ENCODE measurements at regions of chr2 and their contacts with region 1.

Region 1: DNA sequence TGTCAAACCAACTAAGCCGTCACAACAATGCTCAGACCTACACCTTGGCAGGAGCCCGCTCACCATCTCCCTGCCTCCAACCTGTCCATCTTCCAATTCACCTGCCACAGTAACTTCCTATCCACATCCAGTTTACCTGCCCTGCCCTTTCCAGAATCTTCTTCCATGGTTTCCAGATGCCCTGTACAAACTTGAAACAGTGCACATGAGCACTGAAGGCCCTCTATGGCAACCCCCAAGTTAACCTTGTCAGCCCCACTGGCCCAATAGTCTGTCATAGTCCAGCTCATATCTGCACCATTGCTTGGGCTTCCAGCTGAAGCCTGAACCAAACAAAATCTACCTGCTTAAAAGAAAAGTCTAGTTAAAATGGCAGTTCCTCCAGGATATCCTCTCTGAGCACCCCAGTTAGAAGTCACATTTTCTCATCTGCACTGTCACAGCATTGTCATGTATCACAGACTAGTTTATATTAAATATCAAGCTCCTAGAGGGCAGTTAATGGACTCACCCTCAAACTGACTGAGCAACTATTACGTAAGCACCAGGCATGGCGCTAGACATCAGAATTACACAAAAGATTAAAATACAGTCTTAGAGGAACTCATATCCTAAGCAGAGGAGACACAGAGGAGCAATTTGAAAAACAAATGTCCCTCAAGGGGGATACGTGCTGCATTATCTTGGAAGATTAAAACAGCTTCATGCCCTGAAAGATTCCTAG is 11.6 kb downstream of the NFE2L2 start:
- DNase-seq: peak; percentile 60
- H3K4me3 Mint-ChIP-seq: peak overlapping the region; percentile 34
- H3K27ac Mint-ChIP-seq: peak overlapping the region; percentile 85
- H3K4me1 Mint-ChIP-seq: peaks cover 71% of the 10 kb centered on the region
- H3K27me3 Mint-ChIP-seq: no peaks in the 10 kb centered on the region

Region 2: GRCh38 chr2:175709248-175709647 is 1543.7 kb before region 1 on chr2:
- intact Hi-C with region 1: no loop called
- DNase-seq: no peak
- H3K4me3 Mint-ChIP-seq: no peak overlapping the region
- H3K27ac Mint-ChIP-seq: no peak overlapping the region
- H3K4me1 Mint-ChIP-seq: no peaks in the 10 kb centered on the region
- H3K27me3 Mint-ChIP-seq: no peaks in the 10 kb centered on the region

Region 3: DNA sequence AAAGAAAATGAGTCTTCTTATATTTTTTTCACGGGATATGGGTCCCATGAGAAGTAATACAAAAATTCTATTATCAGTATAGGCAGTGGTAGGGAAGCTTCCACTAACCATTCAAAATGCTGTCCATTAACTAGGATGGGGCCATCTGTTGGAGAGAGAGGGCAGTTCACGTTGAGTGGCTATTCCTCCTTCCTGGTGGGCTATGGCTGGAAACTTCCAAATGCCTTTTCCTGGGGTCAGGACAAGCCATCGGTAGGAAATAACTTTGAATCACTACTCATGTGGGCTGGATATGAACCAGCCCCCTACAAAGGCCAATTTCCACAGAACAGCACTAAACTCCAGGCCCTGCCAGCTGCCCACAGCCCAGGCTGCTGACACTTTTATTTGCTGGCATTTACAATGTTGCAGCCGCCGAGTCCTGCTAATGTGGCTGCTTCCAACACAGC is 196.5 kb before region 1 on chr2:
- intact Hi-C with region 1: no loop called
- DNase-seq: no peak
- H3K4me3 Mint-ChIP-seq: no peak overlapping the region
- H3K27ac Mint-ChIP-seq: no peak overlapping the region
- H3K4me1 Mint-ChIP-seq: peaks cover 7% of the 10 kb centered on the region
- H3K27me3 Mint-ChIP-seq: peaks cover 15% of the 10 kb centered on the region

Region 4: GRCh38 chr2:177229448-177230242 is 23.3 kb before region 1 on chr2:
- intact Hi-C with region 1: no loop called
- DNase-seq: peak; percentile 54
- H3K4me3 Mint-ChIP-seq: no peak overlapping the region
- H3K27ac Mint-ChIP-seq: peak overlapping the region; percentile 54
- H3K4me1 Mint-ChIP-seq: peaks cover 31% of the 10 kb centered on the region
- H3K27me3 Mint-ChIP-seq: no peaks in the 10 kb centered on the region

Region 5: GRCh38 chr2:177239932-177240630 is 12.9 kb before region 1 on chr2:
- intact Hi-C with region 1: loop called (anchors 1 kb)
- DNase-seq: peak; percentile 76
- H3K4me3 Mint-ChIP-seq: peak overlapping the region; percentile 63
- H3K27ac Mint-ChIP-seq: peak overlapping the region; percentile 85
- H3K4me1 Mint-ChIP-seq: peaks cover 57% of the 10 kb centered on the region
- H3K27me3 Mint-ChIP-seq: no peaks in the 10 kb centered on the region

Measured in activated CD4-positive, alpha-beta T cell treated with anti-CD3 and anti-CD28 coated beads, Interleukin-2, amount 10 ng/mL, durations not matched to agents 24 days and 14 days (primary cell).